Breast epithelium (tissue), 4 donors: ENCODE measurements at regions of chr3 and their contacts with region 1.

Region 1: GRCh38 chr3:135178566-135178965 is 383.5 kb downstream of the EPHB1 start:
- DNase-seq: no peak
- H3K4me3 ChIP-seq: no peak overlapping the region
- H3K27ac ChIP-seq: no peak overlapping the region
- H3K4me1 ChIP-seq: no peaks in the 10 kb centered on the region
- H3K27me3 ChIP-seq: no peaks in the 10 kb centered on the region
- CTCF ChIP-seq: no peak
- POLR2A ChIP-seq: no peak

Region 2: GRCh38 chr3:134918441-134918840 is 260.1 kb before region 1 on chr3:
- intact Hi-C with region 1: no loop called
- DNase-seq: no peak
- H3K4me3 ChIP-seq: no peak overlapping the region
- H3K27ac ChIP-seq: no peak overlapping the region
- H3K4me1 ChIP-seq: no peaks in the 10 kb centered on the region
- H3K27me3 ChIP-seq: no peaks in the 10 kb centered on the region
- CTCF ChIP-seq: no peak
- POLR2A ChIP-seq: no peak

Region 3: GRCh38 chr3:135159681-135160247 is 18.8 kb before region 1 on chr3:
- intact Hi-C with region 1: no loop called
- DNase-seq: no peak
- H3K4me3 ChIP-seq: no peak overlapping the region
- H3K27ac ChIP-seq: no peak overlapping the region
- H3K4me1 ChIP-seq: no peaks in the 10 kb centered on the region
- H3K27me3 ChIP-seq: no peaks in the 10 kb centered on the region
- CTCF ChIP-seq: no peak
- POLR2A ChIP-seq: no peak

Region 4: GRCh38 chr3:135224815-135225362 is 46.3 kb after region 1 on chr3:
- intact Hi-C with region 1: loop called (anchors 2 kb)
- DNase-seq: no peak
- H3K4me3 ChIP-seq: no peak overlapping the region
- H3K27ac ChIP-seq: no peak overlapping the region
- H3K4me1 ChIP-seq: no peaks in the 10 kb centered on the region
- H3K27me3 ChIP-seq: no peaks in the 10 kb centered on the region
- CTCF ChIP-seq: no peak
- POLR2A ChIP-seq: no peak